ENCODE measurements at regions of chr16 and their contacts with region 1.

Region 1: GRCh38 chr16:25838724-25839186 is 147.0 kb downstream of the HS3ST4 start:
- DNase-seq: peak; percentile 61
- ATAC-seq: no peak
- H3K4me3 ChIP-seq: no peak overlapping the region
- H3K27ac ChIP-seq: no peak overlapping the region
- H3K4me1 ChIP-seq: no peaks in the 10 kb centered on the region
- H3K27me3 ChIP-seq: no peaks in the 10 kb centered on the region
- CTCF ChIP-seq: peak; percentile 72

Region 2: GRCh38 chr16:24988593-24989338 is 850.0 kb before region 1 on chr16:
- CTCF ChIA-PET with region 1: no interaction called
- POLR2A ChIA-PET with region 1: no interaction called
- intact Hi-C with region 1: no loop called
- DNase-seq: peak; percentile 92
- ATAC-seq: peak; percentile 81
- H3K4me3 ChIP-seq: peak overlapping the region; percentile 52
- H3K27ac ChIP-seq: peak overlapping the region; percentile 98
- H3K4me1 ChIP-seq: peaks cover 53% of the 10 kb centered on the region
- H3K27me3 ChIP-seq: no peaks in the 10 kb centered on the region
- CTCF ChIP-seq: no peak

Region 3: DNA sequence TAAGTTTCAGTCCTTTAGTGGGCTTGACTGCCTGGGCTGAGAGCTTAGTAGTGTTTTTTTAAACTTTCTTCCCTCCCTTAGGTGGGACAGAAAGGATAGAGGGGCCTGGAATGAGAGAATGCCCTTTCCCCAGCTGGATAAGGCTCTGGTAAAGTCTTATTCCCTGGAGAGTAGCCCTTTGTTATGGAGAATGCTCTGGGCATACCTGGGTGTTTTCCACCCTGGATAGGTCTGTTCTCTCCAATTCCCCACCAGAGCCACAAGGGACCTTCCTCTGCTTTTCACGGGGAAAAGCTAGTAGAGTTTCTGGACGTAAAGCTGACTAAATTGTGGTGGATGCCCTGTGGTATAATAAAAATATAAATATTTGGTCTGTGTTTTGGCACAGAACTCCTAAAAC is 17.1 kb after region 1 on chr16:
- CTCF ChIA-PET with region 1: no interaction called
- POLR2A ChIA-PET with region 1: no interaction called
- intact Hi-C with region 1: no loop called
- DNase-seq: no peak
- ATAC-seq: no peak
- H3K4me3 ChIP-seq: no peak overlapping the region
- H3K27ac ChIP-seq: no peak overlapping the region
- H3K4me1 ChIP-seq: no peaks in the 10 kb centered on the region
- H3K27me3 ChIP-seq: no peaks in the 10 kb centered on the region
- CTCF ChIP-seq: no peak

Region 4: GRCh38 chr16:27455700-27456099 is 1616.9 kb after region 1 on chr16:
- CTCF ChIA-PET with region 1: no interaction called
- POLR2A ChIA-PET with region 1: no interaction called
- intact Hi-C with region 1: loop called (anchors 5 kb)
- DNase-seq: no peak
- ATAC-seq: no peak
- H3K4me3 ChIP-seq: no peak overlapping the region
- H3K27ac ChIP-seq: no peak overlapping the region
- H3K4me1 ChIP-seq: no peaks in the 10 kb centered on the region
- H3K27me3 ChIP-seq: no peaks in the 10 kb centered on the region
- CTCF ChIP-seq: no peak

Measured in PC-3 (cell line).